Activated naive CD4-positive, alpha-beta T cell treated with anti-CD3 and anti-CD28 coated beads, Interleukin-2, amount 10 ng/mL, durations not matched to agents 7 days and 5 days (primary cell): ENCODE measurements at regions of chr20 and their contacts with region 1.

Region 1: GRCh38 chr20:45293041-45294002 is 13.3 kb upstream of the RBPJL start:
- DNase-seq: peak; percentile 87
- H3K4me3 Mint-ChIP-seq: peak overlapping the region; percentile 64
- H3K27ac Mint-ChIP-seq: no peak overlapping the region
- H3K4me1 Mint-ChIP-seq: peaks cover 7% of the 10 kb centered on the region
- H3K27me3 Mint-ChIP-seq: peaks cover 59% of the 10 kb centered on the region

Region 2: DNA sequence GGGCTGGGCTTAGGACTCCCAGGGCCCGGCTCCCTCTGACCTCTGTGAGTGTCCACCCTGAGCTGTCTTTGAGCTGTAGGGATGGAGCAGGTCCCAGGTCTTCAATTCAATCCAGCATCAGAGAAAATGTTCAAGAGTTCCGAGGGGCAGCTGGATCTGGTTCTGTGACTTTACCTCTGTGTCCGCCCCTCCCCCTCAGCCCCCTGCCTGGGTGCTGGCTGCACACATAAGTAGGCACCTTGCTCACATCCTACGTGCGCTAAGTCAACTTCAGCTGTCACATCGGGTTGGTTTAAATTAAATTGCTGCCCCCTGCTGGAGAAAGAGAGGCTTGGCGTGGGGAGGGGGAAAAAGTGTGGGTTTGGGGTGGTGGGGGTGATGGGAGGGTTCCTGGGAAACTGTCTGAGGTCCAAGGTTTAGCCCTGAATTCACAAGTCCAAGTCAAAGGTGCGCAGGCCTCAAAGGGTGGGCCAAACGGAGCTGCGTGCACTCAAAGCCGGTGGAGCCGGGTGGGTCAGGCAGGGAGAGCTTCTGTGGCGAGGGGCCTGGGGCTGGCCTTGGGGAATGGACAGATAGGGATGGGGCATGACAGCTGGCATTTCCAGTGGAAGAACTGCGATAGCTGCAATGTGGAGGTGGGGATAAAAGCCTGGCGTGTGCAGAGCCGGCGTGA is 181.4 kb before region 1 on chr20:
- CTCF ChIA-PET with region 1: interaction called, 20 read pairs
- DNase-seq: no peak
- H3K4me3 Mint-ChIP-seq: no peak overlapping the region
- H3K27ac Mint-ChIP-seq: no peak overlapping the region
- H3K4me1 Mint-ChIP-seq: no peaks in the 10 kb centered on the region
- H3K27me3 Mint-ChIP-seq: peaks cover 60% of the 10 kb centered on the region

Region 3: DNA sequence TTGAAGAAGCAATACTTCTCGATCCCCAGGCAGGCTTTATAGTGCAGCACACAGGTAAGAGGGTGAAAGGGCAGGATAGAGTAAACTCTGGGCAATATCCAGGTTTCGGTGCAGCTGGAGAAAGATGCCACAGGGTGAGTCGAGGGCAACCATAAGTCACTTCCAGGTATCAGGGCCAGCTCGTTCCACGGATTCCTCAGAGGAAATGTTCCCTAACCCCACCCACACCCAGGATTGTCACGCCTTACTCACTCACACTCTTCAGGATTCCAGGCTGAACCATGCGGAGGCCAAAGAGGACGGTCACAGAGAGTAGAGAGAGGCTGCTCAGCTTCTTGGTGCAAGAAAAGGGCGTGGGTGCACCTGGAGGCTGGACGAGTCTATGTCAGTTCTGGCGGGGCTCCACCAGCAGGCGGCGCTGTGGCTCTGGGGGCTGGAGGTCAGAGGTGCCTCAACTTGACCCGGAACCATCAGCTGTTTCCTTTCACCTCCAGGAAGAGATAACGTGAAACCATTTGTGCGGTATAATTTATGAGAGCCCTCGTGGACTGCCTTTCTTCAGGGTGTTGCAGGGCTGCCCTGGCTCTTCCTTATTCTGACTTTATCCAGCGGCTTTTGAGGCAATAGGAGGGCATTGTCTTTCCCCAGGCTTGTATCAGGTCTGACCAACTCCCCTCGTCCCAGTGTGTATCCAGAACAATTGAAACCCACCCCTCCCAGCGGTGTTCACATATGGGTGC is 154.6 kb before region 1 on chr20:
- CTCF ChIA-PET with region 1: interaction called, 36 read pairs
- DNase-seq: peak; percentile 79
- H3K4me3 Mint-ChIP-seq: no peak overlapping the region
- H3K27ac Mint-ChIP-seq: no peak overlapping the region
- H3K4me1 Mint-ChIP-seq: no peaks in the 10 kb centered on the region
- H3K27me3 Mint-ChIP-seq: peaks cover 24% of the 10 kb centered on the region

Region 4: GRCh38 chr20:45311589-45312211 is 18.4 kb after region 1 on chr20:
- CTCF ChIA-PET with region 1: interaction called, 10 read pairs
- DNase-seq: peak; percentile 72
- H3K4me3 Mint-ChIP-seq: no peak overlapping the region
- H3K27ac Mint-ChIP-seq: no peak overlapping the region
- H3K4me1 Mint-ChIP-seq: peaks cover 17% of the 10 kb centered on the region
- H3K27me3 Mint-ChIP-seq: peaks cover 97% of the 10 kb centered on the region

Region 5: DNA sequence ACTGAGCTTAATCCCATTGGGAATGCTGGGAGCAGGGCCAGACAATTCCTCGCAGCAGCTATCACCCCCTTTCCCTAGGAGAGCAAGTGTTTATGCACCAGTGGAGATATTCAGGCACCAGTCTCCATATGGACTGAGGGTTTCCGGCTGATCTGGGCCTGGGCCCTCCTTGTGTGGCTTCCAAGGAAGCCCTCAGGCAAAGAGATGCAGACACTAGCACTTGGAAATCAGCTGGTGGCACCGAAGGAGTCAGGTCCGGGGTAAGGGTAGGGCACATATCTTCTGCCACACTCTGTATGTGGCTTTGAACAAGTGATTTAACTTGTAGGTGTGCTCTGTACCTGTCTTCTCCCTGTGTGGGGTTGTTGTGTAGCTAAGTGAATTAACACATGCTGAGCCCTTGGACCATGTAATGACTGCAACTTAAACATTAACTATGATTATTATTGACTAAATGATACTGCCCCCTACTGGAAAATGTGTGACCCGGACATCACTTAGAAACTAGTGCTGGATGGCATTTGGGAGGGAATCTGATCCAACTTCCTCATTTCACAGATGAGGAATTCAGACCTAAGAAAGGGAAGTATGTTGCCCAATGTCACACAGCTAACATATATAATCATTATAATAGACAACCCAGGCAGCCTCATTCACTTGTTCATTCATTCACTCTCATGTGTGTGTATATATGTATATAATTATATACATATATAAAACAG is 156.9 kb after region 1 on chr20:
- CTCF ChIA-PET with region 1: interaction called, 22 read pairs
- DNase-seq: peak; percentile 41
- H3K4me3 Mint-ChIP-seq: no peak overlapping the region
- H3K27ac Mint-ChIP-seq: no peak overlapping the region
- H3K4me1 Mint-ChIP-seq: peaks cover 11% of the 10 kb centered on the region
- H3K27me3 Mint-ChIP-seq: peaks cover 24% of the 10 kb centered on the region